Posterior cingulate gyrus (tissue), 11 donors: ENCODE measurements at regions of chr13 and their contacts with region 1.

Region 1: GRCh38 chr13:30465585-30466357 is at the start of gene HMGB1:
- DNase-seq: peak; percentile 99 to 100 (median 100)

Region 2: GRCh38 chr13:30132623-30133553 is 332.9 kb before region 1 on chr13:
- intact Hi-C with region 1: loop called (anchors 2 kb)
- DNase-seq: peak; percentile 94 to 100 (median 99)

Region 3: GRCh38 chr13:30408319-30409101 is 57.3 kb before region 1 on chr13:
- intact Hi-C with region 1: loop called (anchors 1 kb)
- DNase-seq: peak; percentile 81 to 98 (median 92)

Region 4: GRCh38 chr13:30572859-30573275 is 107.1 kb after region 1 on chr13:
- intact Hi-C with region 1: loop called (anchors 5 kb)
- DNase-seq: no peak

Region 5: GRCh38 chr13:30673669-30674521 is 208.1 kb after region 1 on chr13:
- intact Hi-C with region 1: loop called (anchors 10 kb)
- DNase-seq: peak; percentile 77 to 98 (median 86)